Activated T-helper 1 cell treated with anti-CD3 and anti-CD28 coated beads, Interleukin-12 subunit alpha, Interleukin-12 subunit beta, Interleukin-2, Interleukin-4 antibody, amounts not matched to agents 30 ng/mL and 10 ng/mL and 1 ng/mL, durations not matched to agents 14 hours and 24 hours and 36 hours (primary cell): ENCODE measurements at regions of chr7 and their contacts with region 1.

Region 1: GRCh38 chr7:2863461-2864066 is 19.5 kb upstream of the GNA12 start:
- DNase-seq: peak; percentile 75
- H3K4me3 Mint-ChIP-seq: peak overlapping the region; percentile 73
- H3K27ac Mint-ChIP-seq: peak overlapping the region; percentile 86
- H3K4me1 Mint-ChIP-seq: peaks cover 27% of the 10 kb centered on the region
- H3K27me3 Mint-ChIP-seq: no peaks in the 10 kb centered on the region

Region 2: DNA sequence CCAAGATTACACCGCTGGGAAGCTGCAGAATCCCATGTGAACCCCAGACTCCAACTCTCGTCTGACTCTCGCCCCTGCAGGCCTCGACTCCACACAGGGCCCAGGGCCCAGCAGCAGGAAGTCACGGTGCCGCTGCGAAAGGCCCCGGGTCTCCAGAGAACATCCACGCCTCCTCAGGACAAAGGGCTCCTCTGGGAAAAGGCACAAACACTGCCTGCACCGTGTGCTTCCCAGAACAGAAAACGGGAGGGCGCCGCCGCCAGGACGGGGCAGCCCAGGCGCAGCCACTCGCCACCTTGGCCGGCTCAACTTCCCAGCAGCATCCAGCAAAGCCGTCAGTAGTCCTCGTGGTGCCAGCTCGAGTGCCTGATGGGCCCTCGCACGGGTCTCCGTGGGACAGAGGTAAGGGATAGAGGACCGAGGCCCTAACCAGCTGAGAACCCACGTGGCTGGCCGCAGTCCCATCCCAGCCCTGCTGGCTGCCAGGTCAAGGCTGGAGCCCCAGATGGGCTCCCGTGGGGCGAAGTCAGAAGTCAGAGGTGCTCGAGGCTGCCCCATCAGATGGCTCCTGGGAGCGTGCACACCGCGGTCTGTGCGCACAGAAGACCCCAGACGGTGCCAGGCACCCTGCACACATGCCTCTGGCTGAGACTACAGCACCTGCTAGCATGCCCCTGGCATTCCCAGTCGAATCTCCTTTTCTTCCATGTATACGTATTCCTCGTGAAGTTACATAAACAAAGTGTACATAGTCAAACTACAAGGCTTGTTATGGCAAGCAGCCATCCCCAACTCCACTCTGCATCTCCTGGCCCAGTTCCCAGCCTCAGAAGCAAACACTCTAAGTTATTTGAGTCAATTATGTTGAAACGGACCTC is 691.0 kb before region 1 on chr7:
- intact Hi-C with region 1: no loop called
- DNase-seq: no peak
- H3K4me3 Mint-ChIP-seq: no peak overlapping the region
- H3K27ac Mint-ChIP-seq: no peak overlapping the region
- H3K4me1 Mint-ChIP-seq: no peaks in the 10 kb centered on the region
- H3K27me3 Mint-ChIP-seq: no peaks in the 10 kb centered on the region

Region 3: DNA sequence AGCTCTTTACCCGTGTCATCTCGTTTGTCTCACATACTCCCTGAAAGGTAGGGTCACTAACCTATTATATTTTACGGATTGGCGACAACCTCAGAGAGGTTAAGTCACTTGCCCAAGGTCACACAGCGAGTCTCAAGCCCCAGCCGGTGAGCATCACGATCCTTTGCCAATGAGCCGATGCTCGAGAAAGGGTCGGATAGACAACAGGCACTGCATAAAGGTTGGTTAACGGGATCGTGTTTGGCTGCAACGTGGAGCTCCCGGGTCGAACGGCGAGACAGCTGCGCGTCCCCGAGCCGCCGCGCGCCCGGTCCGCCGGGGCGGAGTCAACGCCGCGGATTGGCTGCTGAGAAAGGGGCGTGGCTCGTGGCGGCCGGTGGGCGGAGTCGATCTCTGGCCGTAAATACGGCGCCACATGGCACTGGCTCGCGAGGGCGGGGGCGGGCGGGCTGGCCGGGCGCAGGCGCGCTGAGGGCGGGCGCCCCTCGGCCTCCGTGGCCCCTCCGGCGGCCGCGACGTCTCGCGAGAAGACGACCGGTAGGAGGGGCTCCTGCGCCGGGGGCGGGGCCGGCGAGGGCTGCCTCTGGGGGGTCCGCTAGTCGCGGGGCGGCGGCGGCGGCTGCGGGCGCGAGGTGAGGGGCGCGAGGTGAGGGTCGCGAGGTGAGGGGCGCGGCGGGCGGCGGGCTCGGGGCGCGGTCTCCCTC is 460.4 kb before region 1 on chr7 and contains the start of gene CHST12:
- intact Hi-C with region 1: loop called (anchors 1 kb)
- DNase-seq: peak; percentile 94
- H3K4me3 Mint-ChIP-seq: peak within 1 kb of the TSS; percentile 90
- H3K27ac Mint-ChIP-seq: peak within 1 kb of the TSS; percentile 78
- H3K4me1 Mint-ChIP-seq: peaks cover 51% of the 10 kb centered on the region
- H3K27me3 Mint-ChIP-seq: no peaks in the 10 kb centered on the region
- total RNA-seq, gene CHST12: 9.9 and 10.6 TPM in 2 replicates

Region 4: GRCh38 chr7:2851497-2851896 is 12.1 kb before region 1 on chr7:
- intact Hi-C with region 1: loop called (anchors 1 kb)
- DNase-seq: no peak
- H3K4me3 Mint-ChIP-seq: no peak overlapping the region
- H3K27ac Mint-ChIP-seq: peak overlapping the region; percentile 74
- H3K4me1 Mint-ChIP-seq: peaks cover 7% of the 10 kb centered on the region
- H3K27me3 Mint-ChIP-seq: peaks cover 2% of the 10 kb centered on the region

Region 5: GRCh38 chr7:3065724-3066143 is 202.2 kb after region 1 on chr7:
- intact Hi-C with region 1: loop called (anchors 1 kb)
- DNase-seq: peak; percentile 37
- H3K4me3 Mint-ChIP-seq: no peak overlapping the region
- H3K27ac Mint-ChIP-seq: peak overlapping the region; percentile 78
- H3K4me1 Mint-ChIP-seq: peaks cover 88% of the 10 kb centered on the region
- H3K27me3 Mint-ChIP-seq: no peaks in the 10 kb centered on the region

Region 6: DNA sequence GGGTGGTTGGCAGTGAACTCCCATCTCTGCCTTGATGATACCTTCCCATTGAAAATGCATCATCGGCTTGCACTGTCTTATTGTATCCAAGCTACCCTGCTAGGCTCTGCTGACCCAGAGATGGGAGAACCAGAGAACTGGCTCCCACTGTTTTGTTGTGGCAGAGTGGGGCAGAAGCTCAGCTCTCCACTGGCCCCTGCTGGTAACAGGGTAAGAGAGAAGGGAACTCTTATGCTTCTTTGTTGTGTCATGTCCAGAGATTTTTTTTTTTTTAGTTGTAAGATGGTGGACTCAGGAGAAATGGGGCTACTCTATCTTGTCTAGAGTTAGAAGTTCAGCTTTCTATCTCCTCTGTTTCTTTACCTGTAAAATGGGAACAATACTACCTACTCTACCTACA is 336.9 kb after region 1 on chr7:
- intact Hi-C with region 1: loop called (anchors 1 kb)
- DNase-seq: peak; percentile 11
- H3K4me3 Mint-ChIP-seq: no peak overlapping the region
- H3K27ac Mint-ChIP-seq: peak overlapping the region; percentile 14
- H3K4me1 Mint-ChIP-seq: no peaks in the 10 kb centered on the region
- H3K27me3 Mint-ChIP-seq: peaks cover 11% of the 10 kb centered on the region

Region 7: GRCh38 chr7:3282457-3282856 is 418.9 kb after region 1 on chr7:
- intact Hi-C with region 1: no loop called
- DNase-seq: no peak
- H3K4me3 Mint-ChIP-seq: no peak overlapping the region
- H3K27ac Mint-ChIP-seq: no peak overlapping the region
- H3K4me1 Mint-ChIP-seq: no peaks in the 10 kb centered on the region
- H3K27me3 Mint-ChIP-seq: peaks cover 8% of the 10 kb centered on the region

Region 8: GRCh38 chr7:3673524-3673923 is 810.0 kb after region 1 on chr7:
- intact Hi-C with region 1: loop called (anchors 1 kb)
- DNase-seq: no peak
- H3K4me3 Mint-ChIP-seq: no peak overlapping the region
- H3K27ac Mint-ChIP-seq: no peak overlapping the region
- H3K4me1 Mint-ChIP-seq: no peaks in the 10 kb centered on the region
- H3K27me3 Mint-ChIP-seq: no peaks in the 10 kb centered on the region